ENCODE measurements at regions of chr13 and their contacts with region 1.

Region 1: GRCh38 chr13:46831588-46832194 is 34.7 kb upstream of the ESD start:
- DNase-seq: peak; percentile 22
- ATAC-seq: peak; percentile 54; the same call in 1 of the 3 replicates
- H3K4me3 ChIP-seq: no peak overlapping the region
- H3K27ac ChIP-seq: no peak overlapping the region
- H3K4me1 ChIP-seq: no peaks in the 10 kb centered on the region
- H3K27me3 ChIP-seq: no peaks in the 10 kb centered on the region
- CTCF ChIP-seq: peak; percentile 76
- EP300 ChIP-seq: no peak
- POLR2A ChIP-seq: no peak
- RAD21 ChIP-seq: 0 out of 2 replicates have a peak, but pooled peaks have one; percentile 23

Region 2: GRCh38 chr13:47459512-47459911 is 627.8 kb after region 1 on chr13:
- CTCF ChIA-PET with region 1: no interaction called
- POLR2A ChIA-PET with region 1: no interaction called
- in situ Hi-C with region 1: no loop called
- intact Hi-C with region 1: loop called (anchors 5 kb)
- DNase-seq: no peak
- ATAC-seq: no peak
- H3K4me3 ChIP-seq: no peak overlapping the region
- H3K27ac ChIP-seq: no peak overlapping the region
- H3K4me1 ChIP-seq: no peaks in the 10 kb centered on the region
- H3K27me3 ChIP-seq: no peaks in the 10 kb centered on the region
- CTCF ChIP-seq: no peak
- EP300 ChIP-seq: no peak
- POLR2A ChIP-seq: no peak
- RAD21 ChIP-seq: no peak

Region 3: DNA sequence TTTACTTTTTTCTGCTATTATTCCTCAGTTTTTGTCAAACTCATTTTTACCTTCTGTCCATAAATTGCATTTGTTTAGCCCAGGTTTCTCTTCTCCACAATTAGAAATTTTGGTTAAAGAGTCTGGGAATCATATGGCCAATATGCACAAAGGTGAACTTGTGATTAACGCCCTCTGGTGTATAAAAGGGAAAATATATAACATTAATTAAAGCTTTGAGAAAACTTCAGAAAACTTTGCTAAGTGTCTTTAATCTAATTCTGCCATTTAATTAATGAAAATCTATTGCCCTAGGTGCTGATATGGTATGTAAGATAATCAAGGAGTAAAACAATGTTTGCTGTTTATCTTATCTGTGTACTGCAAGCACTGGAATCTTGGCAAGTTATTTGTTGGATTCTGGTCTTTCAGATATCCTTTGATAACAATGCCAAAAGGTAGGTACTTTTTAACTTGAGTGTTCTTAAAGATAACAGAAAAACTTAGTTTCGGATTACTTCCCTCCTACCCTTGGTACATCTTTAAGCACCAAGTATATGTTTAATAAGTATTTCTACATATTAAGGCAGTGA is 766.7 kb after region 1 on chr13:
- CTCF ChIA-PET with region 1: no interaction called
- POLR2A ChIA-PET with region 1: no interaction called
- in situ Hi-C with region 1: no loop called
- intact Hi-C with region 1: loop called (anchors 5 kb)
- DNase-seq: no peak
- ATAC-seq: no peak
- H3K4me3 ChIP-seq: no peak overlapping the region
- H3K27ac ChIP-seq: no peak overlapping the region
- H3K4me1 ChIP-seq: no peaks in the 10 kb centered on the region
- H3K27me3 ChIP-seq: no peaks in the 10 kb centered on the region
- CTCF ChIP-seq: no peak
- EP300 ChIP-seq: no peak
- POLR2A ChIP-seq: no peak
- RAD21 ChIP-seq: no peak

Region 4: GRCh38 chr13:47774671-47774994 is 942.9 kb after region 1 on chr13:
- CTCF ChIA-PET with region 1: interaction called, 3 read pairs
- POLR2A ChIA-PET with region 1: no interaction called
- in situ Hi-C with region 1: loop called (anchors 25 kb)
- intact Hi-C with region 1: loop called (anchors 2 kb)
- DNase-seq: no peak
- ATAC-seq: peak; percentile 33; the same call in 2 of the 3 replicates
- H3K4me3 ChIP-seq: no peak overlapping the region
- H3K27ac ChIP-seq: no peak overlapping the region
- H3K4me1 ChIP-seq: no peaks in the 10 kb centered on the region
- H3K27me3 ChIP-seq: no peaks in the 10 kb centered on the region
- CTCF ChIP-seq: no peak
- EP300 ChIP-seq: no peak
- POLR2A ChIP-seq: no peak
- RAD21 ChIP-seq: no peak

Measured in HepG2 (cell line).